Activated CD8-positive, alpha-beta T cell treated with anti-CD3 and anti-CD28 coated beads, Interleukin-2, amount 10 ng/mL, durations not matched to agents 7 days and 5 days (primary cell): ENCODE measurements at regions of chr9 and their contacts with region 1.

Region 1: GRCh38 chr9:122350638-122351355 is 20.0 kb upstream of the PTGS1 start:
- DNase-seq: peak; percentile 86
- ATAC-seq: peak; percentile 90
- H3K4me3 Mint-ChIP-seq: no peak overlapping the region
- H3K27ac Mint-ChIP-seq: no peak overlapping the region
- H3K4me1 Mint-ChIP-seq: peaks cover 28% of the 10 kb centered on the region
- H3K27me3 Mint-ChIP-seq: peaks cover 7% of the 10 kb centered on the region

Region 2: DNA sequence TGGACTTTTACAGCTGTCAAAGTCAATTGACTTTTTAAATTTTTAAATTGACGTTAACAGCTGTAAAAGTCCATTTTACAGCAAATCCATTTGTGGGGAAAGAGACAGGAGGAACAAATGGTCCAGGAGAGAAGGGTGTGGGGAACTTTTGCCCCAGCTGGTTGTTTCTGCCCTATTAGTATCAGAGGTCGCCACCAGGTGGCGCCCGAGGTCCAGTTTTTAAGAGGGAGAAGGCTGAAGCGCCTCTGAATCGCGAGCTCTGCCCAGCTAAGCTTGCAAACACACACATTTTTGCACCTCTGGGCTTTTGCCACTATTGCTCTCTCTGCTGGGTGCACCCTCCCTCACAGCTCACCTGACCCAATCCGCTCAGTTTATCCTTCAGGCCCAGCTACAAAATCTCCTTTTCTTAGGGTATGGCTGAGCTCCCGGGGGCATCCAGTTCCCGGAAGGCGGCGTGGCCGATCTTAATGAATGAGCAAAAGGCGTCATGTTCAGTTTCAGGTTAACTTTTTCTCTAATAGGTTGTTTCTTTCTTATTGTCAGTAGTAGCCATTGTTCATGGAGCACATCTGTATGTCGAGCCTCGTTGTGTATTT is 251.4 kb before region 1 on chr9:
- CTCF ChIA-PET with region 1: interaction called, 137 read pairs
- POLR2A ChIA-PET with region 1: interaction called, 3 read pairs
- DNase-seq: peak; percentile 85
- ATAC-seq: peak; percentile 74
- H3K4me3 Mint-ChIP-seq: peak overlapping the region; percentile 32
- H3K27ac Mint-ChIP-seq: no peak overlapping the region
- H3K4me1 Mint-ChIP-seq: peaks cover 13% of the 10 kb centered on the region
- H3K27me3 Mint-ChIP-seq: peaks cover 24% of the 10 kb centered on the region

Region 3: GRCh38 chr9:122134822-122135528 is 215.8 kb before region 1 on chr9:
- CTCF ChIA-PET with region 1: interaction called, 241 read pairs
- POLR2A ChIA-PET with region 1: interaction called, 3 read pairs
- DNase-seq: no peak
- ATAC-seq: no peak
- H3K4me3 Mint-ChIP-seq: no peak overlapping the region
- H3K27ac Mint-ChIP-seq: no peak overlapping the region
- H3K4me1 Mint-ChIP-seq: no peaks in the 10 kb centered on the region
- H3K27me3 Mint-ChIP-seq: peaks cover 3% of the 10 kb centered on the region

Region 4: DNA sequence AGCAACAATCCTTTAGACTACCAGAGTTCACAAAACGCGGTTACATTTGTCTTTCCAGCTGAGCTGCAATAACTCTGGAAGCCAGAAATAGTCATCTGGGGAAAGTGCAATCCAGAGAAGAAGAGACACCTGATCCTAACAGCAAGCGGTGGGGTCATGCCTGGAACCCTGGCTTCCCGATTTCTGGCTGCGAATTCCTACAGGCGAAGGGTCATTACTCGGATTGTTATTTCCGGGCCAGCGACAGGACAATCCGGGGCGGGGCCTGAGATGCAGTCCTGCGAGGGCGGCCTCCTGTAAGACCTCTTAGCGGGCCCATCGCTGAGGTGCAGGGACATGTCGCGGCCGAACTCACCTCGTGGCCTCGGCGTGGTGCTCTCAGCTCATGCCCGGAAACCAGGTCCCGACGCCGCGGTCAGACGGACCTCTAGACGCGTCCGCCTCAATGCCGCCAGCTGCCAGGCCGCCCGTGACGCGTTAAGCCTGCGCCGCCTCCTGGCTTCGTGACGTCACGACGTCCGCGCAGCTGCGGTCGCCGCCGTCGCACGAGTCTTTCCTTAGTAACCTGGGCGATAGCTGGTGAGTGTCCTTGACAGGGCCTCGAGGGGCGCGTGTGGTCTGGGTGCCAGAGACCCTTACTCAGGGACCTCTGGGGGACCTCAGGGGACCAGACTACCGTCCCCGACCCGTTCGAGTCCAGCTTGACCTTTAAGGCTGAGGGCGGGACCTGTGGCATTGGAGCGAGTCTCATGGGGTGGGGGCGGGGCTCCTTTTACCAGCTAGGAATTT is 86.2 kb before region 1 on chr9 and contains the starts of genes MRRF and RBM18:
- CTCF ChIA-PET with region 1: interaction called, 25 read pairs
- POLR2A ChIA-PET with region 1: no interaction called
- DNase-seq: peak; percentile 93
- ATAC-seq: peak; percentile 87
- H3K4me3 Mint-ChIP-seq: peak within 1 kb of the TSS; percentile 97
- H3K27ac Mint-ChIP-seq: peak within 1 kb of the TSS; percentile 99
- H3K4me1 Mint-ChIP-seq: peaks cover 39% of the 10 kb centered on the region
- H3K27me3 Mint-ChIP-seq: no peaks in the 10 kb centered on the region
- total RNA-seq, gene MRRF: 38.6 to 39.1 TPM
- total RNA-seq, gene RBM18: 22.9 to 23.9 TPM

Region 5: DNA sequence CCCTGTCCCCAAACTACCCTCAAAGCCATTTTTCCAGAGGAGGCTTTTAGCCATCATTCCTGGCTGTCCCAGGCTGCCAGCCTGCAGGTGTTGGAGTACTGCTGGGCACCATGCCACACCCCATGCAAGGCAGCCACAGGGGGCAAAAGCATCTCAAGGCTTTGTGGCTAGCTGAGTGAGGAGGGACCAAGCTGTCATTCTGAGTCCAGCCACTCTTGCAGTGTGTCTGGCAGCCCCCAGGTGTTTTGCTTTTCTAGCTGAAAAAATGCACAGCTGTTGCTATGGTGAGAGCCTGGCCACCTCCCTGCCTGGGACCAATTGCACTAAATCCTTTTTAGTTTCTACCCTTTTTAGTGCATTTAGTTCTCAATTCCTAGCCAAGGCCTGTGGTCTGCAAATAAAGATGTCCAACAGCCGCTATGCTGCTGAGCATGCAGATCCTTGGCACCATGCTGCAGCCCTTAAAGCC is 30.4 kb before region 1 on chr9:
- CTCF ChIA-PET with region 1: interaction called, 11 read pairs
- POLR2A ChIA-PET with region 1: no interaction called
- DNase-seq: no peak
- ATAC-seq: no peak
- H3K4me3 Mint-ChIP-seq: no peak overlapping the region
- H3K27ac Mint-ChIP-seq: peak overlapping the region; percentile 20
- H3K4me1 Mint-ChIP-seq: no peaks in the 10 kb centered on the region
- H3K27me3 Mint-ChIP-seq: no peaks in the 10 kb centered on the region

Region 6: DNA sequence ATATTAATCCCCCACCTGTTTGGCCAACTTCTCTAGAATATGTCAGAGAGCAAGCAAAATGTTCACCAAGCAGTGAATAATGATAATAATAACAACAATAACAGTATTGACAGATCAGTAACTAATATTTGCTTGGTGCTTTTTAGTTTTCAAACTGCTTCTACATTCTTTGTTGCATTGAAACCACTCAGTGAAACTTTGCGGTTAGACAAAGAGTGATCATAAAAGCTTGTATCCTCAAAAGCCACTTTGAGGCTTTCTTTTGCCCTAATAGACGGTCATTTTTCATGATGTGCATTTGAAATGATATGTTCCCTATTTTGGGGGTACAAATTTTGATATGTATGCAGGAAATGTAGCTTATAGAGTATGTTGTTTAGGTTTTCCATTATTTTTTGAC is 23.6 kb before region 1 on chr9:
- CTCF ChIA-PET with region 1: interaction called, 11 read pairs
- POLR2A ChIA-PET with region 1: no interaction called
- DNase-seq: no peak
- ATAC-seq: no peak
- H3K4me3 Mint-ChIP-seq: no peak overlapping the region
- H3K27ac Mint-ChIP-seq: no peak overlapping the region
- H3K4me1 Mint-ChIP-seq: no peaks in the 10 kb centered on the region
- H3K27me3 Mint-ChIP-seq: no peaks in the 10 kb centered on the region

Region 7: DNA sequence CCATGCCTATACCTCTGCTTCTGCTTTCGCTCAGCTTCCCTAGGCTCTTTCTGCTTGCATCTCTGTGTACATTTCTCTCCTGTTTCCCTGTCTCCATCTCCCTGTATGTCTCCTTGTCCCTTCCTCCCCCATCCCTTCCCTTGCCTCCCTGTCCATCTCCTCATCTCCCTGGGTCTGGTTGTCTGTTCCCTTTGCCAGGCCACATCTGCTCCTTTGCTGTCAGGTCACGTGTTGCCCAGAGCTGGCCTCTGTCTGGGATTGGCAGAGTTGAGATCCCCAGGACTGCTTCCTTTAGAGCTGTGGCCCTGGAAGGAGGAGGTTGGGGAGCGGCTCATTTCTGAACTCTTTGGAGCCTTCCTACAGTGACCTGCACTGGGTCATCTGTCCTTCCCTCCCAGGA is 11.8 kb before region 1 on chr9:
- CTCF ChIA-PET with region 1: interaction called, 15 read pairs
- POLR2A ChIA-PET with region 1: no interaction called
- DNase-seq: no peak
- ATAC-seq: no peak
- H3K4me3 Mint-ChIP-seq: no peak overlapping the region
- H3K27ac Mint-ChIP-seq: no peak overlapping the region
- H3K4me1 Mint-ChIP-seq: no peaks in the 10 kb centered on the region
- H3K27me3 Mint-ChIP-seq: peaks cover 3% of the 10 kb centered on the region